ENCODE measurements at regions of chr14 and their contacts with region 1.

Region 1: DNA sequence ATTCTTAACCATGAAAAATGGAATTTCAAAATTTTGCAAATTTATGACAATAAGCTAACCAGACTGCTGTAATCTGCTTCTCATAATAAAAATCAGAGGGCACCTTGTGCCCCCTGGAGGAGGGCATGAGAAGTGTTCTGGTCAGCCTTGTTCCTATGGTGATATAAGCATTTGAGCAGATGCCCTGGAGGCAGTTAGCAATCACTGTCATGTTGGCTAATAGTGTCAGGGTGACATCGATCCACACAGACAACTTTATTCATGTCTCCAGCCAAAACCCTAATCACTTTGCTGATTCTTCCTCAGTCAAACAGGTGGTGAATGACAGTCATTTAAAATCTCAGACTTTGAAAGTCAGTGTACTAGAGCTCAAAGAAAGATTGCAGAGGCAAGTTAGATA is 943.0 kb downstream of the GALC start:
- DNase-seq: peak; percentile 75
- H3K4me3 ChIP-seq: no peak overlapping the region
- H3K27ac ChIP-seq: no peak overlapping the region
- H3K4me1 ChIP-seq: peaks cover 6% of the 10 kb centered on the region
- H3K27me3 ChIP-seq: no peaks in the 10 kb centered on the region
- CTCF ChIP-seq: peak; percentile 82 to 86

Region 2: DNA sequence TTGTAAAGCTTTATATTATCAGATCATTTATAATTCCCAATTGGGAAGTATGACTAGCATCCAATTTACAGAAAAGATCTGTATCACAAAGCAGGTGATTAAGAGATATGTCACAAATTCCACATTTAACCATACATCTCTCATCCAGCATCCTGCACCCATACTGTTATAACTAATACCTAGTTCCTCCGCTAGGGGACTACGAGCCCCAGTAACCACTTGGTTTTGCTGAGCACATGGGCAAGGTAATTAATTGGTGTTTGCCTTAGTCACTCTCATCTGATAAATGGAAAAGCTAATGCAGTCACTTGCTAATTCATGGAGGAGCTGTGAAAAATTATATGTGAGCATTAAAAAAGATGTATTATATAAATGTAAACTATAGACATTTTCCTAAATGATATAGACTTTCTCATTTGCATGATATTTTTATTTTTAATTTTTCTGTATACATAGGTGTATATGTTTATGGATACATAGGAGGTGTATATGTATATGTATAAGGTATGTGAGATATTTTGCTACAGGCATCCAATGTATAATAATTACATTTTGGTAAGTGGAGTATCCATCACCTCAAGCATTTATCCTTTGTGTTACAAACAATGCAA is 88.7 kb before region 1 on chr14:
- CTCF ChIA-PET with region 1: interaction called, 3 read pairs
- dilution Hi-C with region 1: no loop called
- in situ Hi-C with region 1: no loop called
- intact Hi-C with region 1: loop called (anchors 5 kb)
- DNase-seq: peak; percentile 25
- H3K4me3 ChIP-seq: no peak overlapping the region
- H3K27ac ChIP-seq: no peak overlapping the region
- H3K4me1 ChIP-seq: no peaks in the 10 kb centered on the region
- H3K27me3 ChIP-seq: no peaks in the 10 kb centered on the region
- CTCF ChIP-seq: peak; percentile 35 to 56

Region 3: GRCh38 chr14:87014854-87015253 is 35.1 kb before region 1 on chr14:
- CTCF ChIA-PET with region 1: no interaction called
- dilution Hi-C with region 1: no loop called
- in situ Hi-C with region 1: no loop called
- intact Hi-C with region 1: loop called (anchors 2 kb)
- DNase-seq: no peak
- H3K4me3 ChIP-seq: no peak overlapping the region
- H3K27ac ChIP-seq: no peak overlapping the region
- H3K4me1 ChIP-seq: peaks cover 6% of the 10 kb centered on the region
- H3K27me3 ChIP-seq: no peaks in the 10 kb centered on the region
- CTCF ChIP-seq: peak; percentile 26 to 48

Region 4: GRCh38 chr14:87079416-87079815 is 29.5 kb after region 1 on chr14:
- CTCF ChIA-PET with region 1: no interaction called
- dilution Hi-C with region 1: no loop called
- in situ Hi-C with region 1: no loop called
- intact Hi-C with region 1: no loop called
- DNase-seq: no peak
- H3K4me3 ChIP-seq: no peak overlapping the region
- H3K27ac ChIP-seq: no peak overlapping the region
- H3K4me1 ChIP-seq: no peaks in the 10 kb centered on the region
- H3K27me3 ChIP-seq: no peaks in the 10 kb centered on the region
- CTCF ChIP-seq: no peak

Measured in mammary epithelial cell (primary cell).